MCF 10A (cell line): ENCODE measurements at regions of chr9 and their contacts with region 1.

Region 1: DNA sequence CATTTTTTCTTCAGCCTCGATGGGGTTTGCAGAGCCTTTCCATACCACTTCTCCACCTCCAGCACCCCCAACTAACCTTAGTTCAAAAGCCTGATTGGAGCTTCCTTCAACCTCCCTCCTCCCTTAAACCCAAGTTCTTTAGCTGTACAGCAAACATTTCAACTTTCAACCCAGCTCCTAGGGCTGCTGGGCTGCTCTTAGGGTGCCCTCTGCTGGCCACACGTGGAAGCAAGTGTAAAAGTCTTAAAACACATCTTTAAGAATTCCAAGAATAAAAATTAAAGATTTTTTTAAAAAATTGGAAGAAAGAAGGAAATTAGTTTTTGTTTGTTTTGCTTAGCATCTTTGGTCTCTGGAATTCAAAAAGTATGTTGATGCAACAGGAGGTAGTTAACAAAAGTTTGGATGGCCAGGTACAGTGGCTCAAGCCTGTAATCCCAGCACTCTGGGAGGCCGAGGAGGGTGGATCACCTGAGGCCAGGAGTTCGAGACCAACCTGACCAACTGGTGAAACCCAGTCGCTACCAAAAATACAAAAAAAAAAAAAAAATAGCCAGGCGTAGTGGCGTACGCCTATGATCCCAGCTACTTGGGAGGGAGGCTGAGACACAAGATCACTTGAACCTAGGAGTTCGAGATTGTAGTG is 15.5 kb upstream of the HSD17B3 start:
- DNase-seq: peak; percentile 61
- H3K4me3 Mint-ChIP-seq: no peak overlapping the region
- H3K27ac Mint-ChIP-seq: no peak overlapping the region
- H3K4me1 Mint-ChIP-seq: peaks cover 6% of the 10 kb centered on the region
- H3K27me3 Mint-ChIP-seq: no peaks in the 10 kb centered on the region
- CTCF ChIP-seq: peak; percentile 80

Region 2: DNA sequence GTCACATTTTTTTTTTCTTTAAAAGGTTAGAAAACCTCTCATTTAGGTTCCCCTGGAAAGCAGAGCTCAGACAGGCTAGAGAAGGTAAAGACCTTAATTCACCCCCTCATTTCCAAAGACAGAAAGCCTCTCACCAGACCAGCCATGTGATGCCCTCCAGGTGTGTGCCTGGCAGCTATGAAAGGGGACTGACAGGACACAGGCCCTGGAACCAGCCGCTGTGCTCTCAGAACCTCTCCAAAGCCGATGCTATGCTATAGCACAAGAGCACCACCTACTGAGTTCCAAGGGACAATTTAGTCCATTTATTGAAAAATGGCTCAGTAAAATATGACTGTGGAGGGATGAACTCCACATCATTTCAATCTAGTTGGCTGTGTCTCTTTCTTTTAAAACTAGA is 1048.8 kb before region 1 on chr9:
- CTCF ChIA-PET with region 1: no interaction called
- POLR2A ChIA-PET with region 1: no interaction called
- intact Hi-C with region 1: loop called (anchors 5 kb)
- DNase-seq: peak; percentile 29
- H3K4me3 Mint-ChIP-seq: no peak overlapping the region
- H3K27ac Mint-ChIP-seq: no peak overlapping the region
- H3K4me1 Mint-ChIP-seq: no peaks in the 10 kb centered on the region
- H3K27me3 Mint-ChIP-seq: no peaks in the 10 kb centered on the region
- CTCF ChIP-seq: no peak

Region 3: GRCh38 chr9:95726756-95727155 is 590.7 kb before region 1 on chr9:
- CTCF ChIA-PET with region 1: interaction called, 5 read pairs
- POLR2A ChIA-PET with region 1: no interaction called
- intact Hi-C with region 1: loop called (anchors 5 kb)
- DNase-seq: peak; percentile 67
- H3K4me3 Mint-ChIP-seq: no peak overlapping the region
- H3K27ac Mint-ChIP-seq: no peak overlapping the region
- H3K4me1 Mint-ChIP-seq: no peaks in the 10 kb centered on the region
- H3K27me3 Mint-ChIP-seq: no peaks in the 10 kb centered on the region
- CTCF ChIP-seq: peak; percentile 62

Region 4: GRCh38 chr9:96150324-96151227 is 166.9 kb before region 1 on chr9:
- CTCF ChIA-PET with region 1: no interaction called
- POLR2A ChIA-PET with region 1: no interaction called
- intact Hi-C with region 1: no loop called
- DNase-seq: no peak
- H3K4me3 Mint-ChIP-seq: no peak overlapping the region
- H3K27ac Mint-ChIP-seq: no peak overlapping the region
- H3K4me1 Mint-ChIP-seq: no peaks in the 10 kb centered on the region
- H3K27me3 Mint-ChIP-seq: peaks cover 17% of the 10 kb centered on the region
- CTCF ChIP-seq: no peak

Region 5: DNA sequence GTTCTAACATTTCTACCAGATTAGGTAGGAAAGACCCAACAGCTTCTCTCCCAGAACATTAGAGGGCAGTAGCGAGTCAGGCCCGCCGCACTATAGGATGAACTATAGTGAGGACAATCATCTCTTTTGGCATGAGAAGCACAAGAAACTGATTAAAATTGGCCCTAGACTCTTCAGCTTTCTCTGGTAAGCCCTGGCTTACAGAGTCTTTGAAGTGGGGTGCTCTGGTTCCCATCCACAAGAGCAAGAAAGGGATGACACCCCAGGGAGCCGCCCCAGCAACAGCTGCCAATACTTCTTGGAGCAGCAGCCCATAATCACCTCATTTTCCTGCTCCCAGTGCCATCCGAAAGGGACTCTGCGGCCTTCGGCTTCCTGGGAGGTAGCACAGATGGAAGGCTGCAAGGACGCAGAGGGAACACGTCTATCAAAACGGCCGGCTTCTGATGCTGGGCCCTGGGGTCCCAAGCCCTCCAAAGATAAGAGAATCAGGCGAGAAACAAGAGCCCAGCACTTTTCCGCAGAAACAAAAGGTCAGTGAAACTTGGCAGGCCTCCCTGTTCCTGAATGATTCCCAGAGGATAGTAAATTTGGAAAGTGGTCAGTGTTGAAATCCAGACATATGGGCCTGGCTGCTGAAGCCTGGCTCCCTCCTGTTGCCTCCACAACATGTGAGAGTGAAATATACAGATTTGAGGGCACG is 84.8 kb before region 1 on chr9:
- CTCF ChIA-PET with region 1: interaction called, 105 read pairs
- POLR2A ChIA-PET with region 1: no interaction called
- intact Hi-C with region 1: loop called (anchors 1 kb)
- DNase-seq: peak; percentile 79
- H3K4me3 Mint-ChIP-seq: no peak overlapping the region
- H3K27ac Mint-ChIP-seq: no peak overlapping the region
- H3K4me1 Mint-ChIP-seq: peaks cover 6% of the 10 kb centered on the region
- H3K27me3 Mint-ChIP-seq: peaks cover 59% of the 10 kb centered on the region
- CTCF ChIP-seq: peak; percentile 84

Region 6: DNA sequence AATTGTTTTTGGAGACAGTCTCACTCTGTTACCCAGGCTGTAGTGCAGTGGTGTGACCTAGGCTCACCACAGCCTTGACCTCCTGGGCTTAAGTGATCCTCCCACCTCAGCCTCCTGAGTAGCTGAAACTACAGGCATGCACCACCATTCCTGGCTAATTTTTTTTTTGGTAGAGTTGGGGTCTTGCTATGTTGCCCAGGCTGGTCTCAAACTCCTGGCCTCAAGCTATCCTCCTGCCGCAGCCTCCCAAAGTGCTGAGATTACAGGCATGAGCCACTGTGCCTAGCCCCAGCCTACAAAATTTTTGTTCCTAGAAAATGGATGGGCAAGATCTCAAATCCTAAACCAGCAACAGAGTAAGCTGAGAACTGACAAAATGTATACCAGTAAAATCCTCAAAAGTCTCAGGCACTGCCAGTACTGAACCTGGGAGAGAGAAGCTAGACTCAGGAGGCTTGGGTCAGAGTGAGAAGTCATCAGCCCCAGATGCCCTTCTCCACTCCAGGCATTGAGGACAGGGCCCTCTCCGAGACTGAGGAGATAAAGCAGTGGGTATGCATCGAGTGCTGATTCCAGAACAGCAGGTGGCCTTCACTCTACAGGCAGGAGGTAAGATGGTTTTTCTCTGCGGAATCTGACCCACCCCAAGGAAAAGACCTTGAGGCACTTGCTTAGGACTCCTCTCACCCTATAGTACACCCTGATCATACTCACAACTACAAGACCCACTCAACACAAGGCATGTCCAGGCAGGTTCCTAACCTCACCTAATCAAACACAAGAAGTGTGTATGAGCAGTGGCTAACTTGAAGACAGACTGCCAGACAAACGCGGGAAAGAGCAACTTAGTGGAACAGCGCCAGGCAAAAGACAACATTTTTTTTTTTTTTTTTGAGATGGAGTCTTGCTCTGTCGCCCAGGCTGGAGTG is 50.9 kb before region 1 on chr9:
- CTCF ChIA-PET with region 1: interaction called, 10 read pairs
- POLR2A ChIA-PET with region 1: no interaction called
- intact Hi-C with region 1: no loop called
- DNase-seq: peak; percentile 73
- H3K4me3 Mint-ChIP-seq: no peak overlapping the region
- H3K27ac Mint-ChIP-seq: peak overlapping the region; percentile 64
- H3K4me1 Mint-ChIP-seq: peaks cover 7% of the 10 kb centered on the region
- H3K27me3 Mint-ChIP-seq: no peaks in the 10 kb centered on the region
- CTCF ChIP-seq: no peak

Region 7: DNA sequence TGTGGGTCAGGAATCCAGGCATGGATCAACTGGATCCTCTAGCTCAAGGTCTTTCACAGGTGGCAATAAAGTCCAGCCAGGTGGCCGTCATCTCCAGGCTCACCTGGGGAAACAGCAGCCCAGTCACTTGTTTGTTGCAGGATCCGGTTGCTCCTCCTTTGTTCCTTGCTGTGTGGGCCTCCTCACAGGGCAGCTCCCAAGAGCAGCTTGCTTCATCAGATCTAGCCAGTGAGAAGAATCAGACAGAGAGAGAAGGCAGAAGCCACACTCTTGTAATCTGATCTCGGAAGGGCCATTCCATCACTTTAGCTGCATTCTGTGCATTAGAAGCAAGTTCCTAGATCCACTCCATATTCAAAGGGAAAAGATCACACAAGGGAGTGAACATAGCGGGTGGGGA is 12.3 kb before region 1 on chr9:
- CTCF ChIA-PET with region 1: interaction called, 10 read pairs
- POLR2A ChIA-PET with region 1: no interaction called
- intact Hi-C with region 1: no loop called
- DNase-seq: no peak
- H3K4me3 Mint-ChIP-seq: no peak overlapping the region
- H3K27ac Mint-ChIP-seq: no peak overlapping the region
- H3K4me1 Mint-ChIP-seq: no peaks in the 10 kb centered on the region
- H3K27me3 Mint-ChIP-seq: no peaks in the 10 kb centered on the region
- CTCF ChIP-seq: no peak

Region 8: DNA sequence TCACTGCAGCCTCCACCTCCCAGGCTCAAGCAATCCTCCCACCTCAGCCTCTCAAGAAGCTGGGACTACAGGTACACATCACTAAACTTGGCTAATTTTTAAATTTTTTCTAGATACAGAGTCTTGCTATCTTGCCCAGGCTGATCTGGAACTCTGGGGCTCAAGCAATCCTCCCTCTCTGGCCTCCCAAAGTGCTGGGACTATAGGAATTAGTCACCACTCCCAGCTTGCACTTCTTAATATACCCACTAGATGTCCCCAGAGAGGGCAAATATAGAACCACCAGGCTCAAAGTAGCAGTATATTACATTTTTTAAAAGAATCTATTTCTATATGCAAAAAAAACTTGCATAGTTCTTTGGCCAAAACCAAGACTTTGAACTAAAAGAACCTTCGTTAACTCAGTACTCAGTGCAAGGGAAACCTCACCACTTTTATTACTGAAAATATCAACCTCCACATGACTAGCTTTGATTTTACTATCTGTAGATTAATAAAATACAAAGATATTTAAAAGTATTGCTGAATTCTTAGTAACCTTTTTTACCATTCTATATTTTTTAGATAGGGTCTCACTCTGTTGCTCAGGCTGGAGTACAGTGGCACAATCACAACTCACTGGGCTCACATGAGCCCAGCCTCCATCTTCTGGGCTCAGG is 10.4 kb after region 1 on chr9:
- CTCF ChIA-PET with region 1: interaction called, 15 read pairs
- POLR2A ChIA-PET with region 1: no interaction called
- intact Hi-C with region 1: no loop called
- DNase-seq: peak; percentile 78
- H3K4me3 Mint-ChIP-seq: no peak overlapping the region
- H3K27ac Mint-ChIP-seq: no peak overlapping the region
- H3K4me1 Mint-ChIP-seq: peaks cover 7% of the 10 kb centered on the region
- H3K27me3 Mint-ChIP-seq: no peaks in the 10 kb centered on the region
- CTCF ChIP-seq: peak; percentile 83

Region 9: GRCh38 chr9:96436063-96436455 is 118.6 kb after region 1 on chr9:
- CTCF ChIA-PET with region 1: no interaction called
- POLR2A ChIA-PET with region 1: no interaction called
- intact Hi-C with region 1: no loop called
- DNase-seq: no peak
- H3K4me3 Mint-ChIP-seq: no peak overlapping the region
- H3K27ac Mint-ChIP-seq: no peak overlapping the region
- H3K4me1 Mint-ChIP-seq: no peaks in the 10 kb centered on the region
- H3K27me3 Mint-ChIP-seq: no peaks in the 10 kb centered on the region
- CTCF ChIP-seq: no peak